ENCODE measurements at regions of chr19 and their contacts with region 1.

Region 1: GRCh38 chr19:57279418-57280066 is 743 bp upstream of the ZNF460 start:
- DNase-seq: peak; percentile 86 to 92
- ATAC-seq: peak; percentile 94 to 99 (median 97)
- H3K4me3 ChIP-seq: peak overlapping the region; percentile 70 to 99 (median 92)
- H3K27ac ChIP-seq: peak overlapping the region; percentile 85 to 100 (median 97)
- H3K4me1 ChIP-seq: peaks cover 0 to 50% (median 42%) of the 10 kb centered on the region in 9 donors
- H3K27me3 ChIP-seq: no peaks in the 10 kb centered on the region
- CTCF ChIP-seq: peak in 5 of 9 donors; percentile 38 to 67 (median 64)

Region 2: GRCh38 chr19:57240311-57241090 is 39.0 kb before region 1 on chr19 and contains the start of gene ZNF805:
- intact Hi-C with region 1: loop called in 8 of 10 experiments (anchors 1 to 5 kb)
- DNase-seq: peak; percentile 97 to 98
- ATAC-seq: peak; percentile 98 to 100 (median 99)
- H3K4me3 ChIP-seq: peak within 1 kb of the TSS; percentile 75 to 94 (median 88)
- H3K27ac ChIP-seq: peak within 1 kb of the TSS; percentile 65 to 96 (median 94)
- H3K4me1 ChIP-seq: peaks cover 7 to 34% (median 22%) of the 10 kb centered on the region in 9 donors
- H3K27me3 ChIP-seq: no peaks in the 10 kb centered on the region
- CTCF ChIP-seq: peak in 3 of 9 donors; percentile 18 to 36 (median 36)
- total RNA-seq, gene ZNF805: 9.4 to 14.7 (median 11.5) TPM

Region 3: GRCh38 chr19:57320180-57321084 is 40.9 kb after region 1 on chr19 and contains the start of gene ZNF543:
- intact Hi-C with region 1: loop called in 3 of 10 experiments (anchors 5 kb)
- DNase-seq: peak; percentile 96 to 97
- ATAC-seq: peak; percentile 99 to 100 (median 100)
- H3K4me3 ChIP-seq: peak within 1 kb of the TSS; percentile 76 to 98 (median 86)
- H3K27ac ChIP-seq: peak within 1 kb of the TSS; percentile 44 to 96 (median 92)
- H3K4me1 ChIP-seq: peaks cover 5 to 34% (median 23%) of the 10 kb centered on the region in 9 donors
- H3K27me3 ChIP-seq: peaks cover 0 to 27% (median 0%) of the 10 kb centered on the region in 7 donors
- CTCF ChIP-seq: peak in 1 of 9 donors; percentile 10
- total RNA-seq, gene ZNF543: 5.5 to 9.2 (median 7.0) TPM

Region 4: DNA sequence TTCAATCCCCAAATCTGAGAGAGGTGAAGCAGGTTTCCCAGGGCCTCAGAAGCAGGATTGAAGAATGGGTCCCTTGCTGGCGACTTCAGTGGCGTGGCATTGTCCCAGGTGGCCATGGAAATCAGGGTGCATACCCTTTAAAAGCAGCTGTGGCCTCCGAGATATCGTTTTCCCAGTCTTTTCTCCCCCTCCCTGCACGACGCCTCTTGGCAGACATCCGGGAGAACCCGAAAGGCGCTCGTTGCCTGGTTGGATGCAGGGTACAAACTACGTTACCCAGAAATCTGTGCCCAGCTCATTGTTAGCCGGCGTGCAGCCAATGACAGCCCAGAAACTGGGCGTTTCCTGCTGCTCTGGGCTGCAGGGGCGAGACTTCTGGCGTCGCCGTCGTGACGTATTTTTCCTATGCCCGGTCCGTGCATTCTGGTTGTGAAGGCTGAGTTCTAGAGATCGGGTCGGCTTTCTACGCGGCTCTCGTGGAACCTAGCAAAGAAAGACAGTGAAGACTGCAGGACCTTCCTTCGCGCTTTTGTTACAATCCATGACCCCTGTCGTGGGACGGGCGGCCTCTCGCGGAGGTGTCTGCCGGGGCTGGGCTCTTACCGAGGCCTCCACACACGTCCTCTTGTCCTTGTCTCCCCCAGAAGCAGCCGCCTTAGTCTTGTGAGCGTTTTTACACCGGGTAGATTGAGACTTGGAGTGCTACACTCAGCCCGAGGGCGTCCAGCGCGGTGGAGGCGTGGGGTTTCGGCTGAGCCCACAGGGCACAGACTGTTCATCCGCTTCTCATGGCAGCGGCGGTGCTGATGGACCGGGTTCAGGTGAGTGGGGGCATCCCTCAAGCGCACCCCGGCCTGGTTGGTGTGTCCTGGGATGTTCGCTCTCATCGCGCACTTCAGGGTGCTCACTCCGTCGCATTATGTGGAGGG is 71.6 kb after region 1 on chr19 and contains the start of gene ZNF304:
- intact Hi-C with region 1: loop called in 4 of 10 experiments (anchors 5 kb)
- DNase-seq: peak; percentile 93 to 96
- ATAC-seq: peak; percentile 96 to 100 (median 99)
- H3K4me3 ChIP-seq: peak within 1 kb of the TSS; percentile 77 to 100 (median 92)
- H3K27ac ChIP-seq: peak within 1 kb of the TSS; percentile 45 to 94 (median 90)
- H3K4me1 ChIP-seq: peaks cover 0 to 45% (median 25%) of the 10 kb centered on the region in 9 donors
- H3K27me3 ChIP-seq: no peaks in the 10 kb centered on the region
- CTCF ChIP-seq: no peak
- total RNA-seq, gene ZNF304: 8.0 to 15.7 (median 11.4) TPM

Region 5: DNA sequence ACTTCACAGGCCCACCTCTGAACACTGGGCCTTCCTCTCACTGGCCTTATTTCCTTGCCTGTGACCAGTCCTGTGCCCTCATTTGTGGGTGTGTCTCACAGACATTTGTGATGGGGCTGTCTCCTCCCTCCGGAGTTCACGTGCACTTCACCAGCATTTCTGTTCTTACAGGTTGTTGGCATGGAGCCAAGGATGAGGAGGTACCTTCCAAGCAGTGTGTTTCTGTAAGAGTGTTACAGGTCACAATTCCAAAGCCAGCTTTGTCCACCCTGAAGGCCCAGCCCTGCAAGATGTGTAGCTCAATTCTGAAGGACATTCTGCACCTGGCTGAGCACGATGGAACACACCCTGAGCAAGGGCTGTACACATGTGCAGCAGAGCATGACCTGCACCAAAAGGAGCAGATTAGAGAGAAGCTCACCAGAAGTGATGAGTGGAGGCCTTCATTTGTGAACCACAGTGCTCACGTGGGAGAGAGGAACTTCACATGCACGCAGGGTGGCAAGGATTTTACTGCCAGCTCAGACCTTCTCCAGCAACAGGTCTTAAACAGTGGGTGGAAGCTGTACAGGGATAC is 163.7 kb after region 1 on chr19:
- intact Hi-C with region 1: no loop called
- DNase-seq: no peak
- ATAC-seq: no peak
- H3K4me3 ChIP-seq: no peak overlapping the region
- H3K27ac ChIP-seq: no peak overlapping the region
- H3K4me1 ChIP-seq: peaks cover 0 to 5% (median 0%) of the 10 kb centered on the region in 9 donors
- H3K27me3 ChIP-seq: no peaks in the 10 kb centered on the region
- CTCF ChIP-seq: no peak

Region 6: GRCh38 chr19:57515234-57515633 is 235.7 kb after region 1 on chr19:
- intact Hi-C with region 1: no loop called
- DNase-seq: no peak
- ATAC-seq: no peak
- H3K4me3 ChIP-seq: no peak overlapping the region
- H3K27ac ChIP-seq: no peak overlapping the region
- H3K4me1 ChIP-seq: no peaks in the 10 kb centered on the region
- H3K27me3 ChIP-seq: no peaks in the 10 kb centered on the region
- CTCF ChIP-seq: no peak

Measured in heart right ventricle (tissue), 16 donors.